CD4-positive, alpha-beta memory T cell (primary cell): ENCODE measurements at regions of chr2 and their contacts with region 1.

Region 1: DNA sequence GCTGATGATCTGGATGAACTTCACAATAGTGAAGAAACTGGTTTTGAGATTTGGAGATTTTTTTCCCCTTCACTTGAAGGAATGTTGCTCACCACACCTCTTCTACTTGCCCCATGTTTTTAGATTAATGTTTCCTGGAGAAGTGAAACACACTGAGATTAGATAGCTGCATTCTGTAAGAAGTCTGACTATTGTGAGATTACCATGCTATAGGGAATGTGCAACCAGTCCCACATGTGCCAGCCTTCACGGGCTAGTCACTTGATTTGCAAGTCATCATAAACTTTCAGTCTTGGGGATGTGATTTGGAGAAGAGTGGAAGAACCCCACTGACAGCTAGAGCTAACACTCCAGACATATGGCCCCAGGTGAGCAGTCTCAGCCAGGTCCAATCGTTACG is 7.4 kb upstream of the CCNYL1 start:
- DNase-seq: no peak
- H3K4me3 ChIP-seq: no peak overlapping the region
- H3K4me3 Mint-ChIP-seq: no peak overlapping the region
- H3K27ac ChIP-seq: no peak overlapping the region
- H3K27ac Mint-ChIP-seq: no peak overlapping the region
- H3K4me1 ChIP-seq: no peaks in the 10 kb centered on the region
- H3K4me1 Mint-ChIP-seq: no peaks in the 10 kb centered on the region
- H3K27me3 ChIP-seq: no peaks in the 10 kb centered on the region
- H3K27me3 Mint-ChIP-seq: peaks cover 0 to 1% of the 10 kb centered on the region in 2 donors

Region 2: DNA sequence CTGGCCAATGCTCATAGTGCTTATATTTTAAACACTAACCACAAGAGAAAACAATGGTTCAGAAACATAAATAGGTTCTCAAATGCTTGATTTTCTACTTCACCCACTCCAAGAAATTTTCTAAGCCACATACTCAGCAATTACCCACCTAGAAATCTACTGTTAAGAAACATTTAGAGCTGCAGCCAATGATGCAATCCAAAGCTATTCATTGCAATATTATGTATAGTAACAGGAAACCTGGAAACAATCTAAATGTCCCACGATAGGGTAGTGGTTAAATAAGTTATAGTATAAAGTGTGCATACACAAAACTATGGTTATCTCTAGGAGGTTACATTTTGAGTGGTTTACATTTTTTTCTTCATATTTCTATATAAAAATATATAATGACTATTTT is 1056.1 kb before region 1 on chr2:
- CTCF ChIA-PET with region 1: no interaction called
- POLR2A ChIA-PET with region 1: no interaction called
- intact Hi-C with region 1: no loop called
- DNase-seq: no peak
- H3K4me3 ChIP-seq: no peak overlapping the region
- H3K4me3 Mint-ChIP-seq: no peak overlapping the region
- H3K27ac ChIP-seq: no peak overlapping the region
- H3K27ac Mint-ChIP-seq: no peak overlapping the region
- H3K4me1 ChIP-seq: no peaks in the 10 kb centered on the region
- H3K4me1 Mint-ChIP-seq: no peaks in the 10 kb centered on the region
- H3K27me3 ChIP-seq: no peaks in the 10 kb centered on the region
- H3K27me3 Mint-ChIP-seq: peaks cover 5 to 13% of the 10 kb centered on the region in 2 donors

Region 3: DNA sequence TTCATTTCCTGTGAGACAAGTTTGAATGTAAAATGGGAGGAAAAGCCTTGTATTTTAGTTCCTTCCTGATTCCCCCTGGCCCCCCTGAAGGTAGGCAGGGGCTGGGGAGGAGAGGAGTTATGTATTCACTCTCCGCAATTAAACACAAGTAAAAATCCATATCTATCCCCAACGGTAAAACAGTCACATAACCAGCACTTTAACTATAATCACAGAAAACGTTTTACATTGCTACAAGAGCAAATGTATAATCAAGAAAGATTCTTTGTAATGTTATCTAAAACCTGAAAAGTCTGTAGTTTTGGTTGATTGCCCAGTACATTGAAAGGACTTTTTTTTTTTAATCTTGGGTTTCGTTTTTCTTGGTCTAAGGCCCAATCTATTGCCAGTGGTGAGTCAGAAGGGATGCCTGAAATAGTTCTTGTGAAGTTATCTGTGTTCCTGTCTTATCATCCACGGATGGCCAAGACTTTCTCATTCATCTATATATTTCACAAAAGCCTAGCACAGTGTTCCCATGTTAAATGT is 27.2 kb before region 1 on chr2:
- CTCF ChIA-PET with region 1: no interaction called
- POLR2A ChIA-PET with region 1: no interaction called
- intact Hi-C with region 1: loop called (anchors 1 kb)
- DNase-seq: no peak
- H3K4me3 ChIP-seq: no peak overlapping the region
- H3K4me3 Mint-ChIP-seq: no peak overlapping the region
- H3K27ac ChIP-seq: no peak overlapping the region
- H3K27ac Mint-ChIP-seq: no peak overlapping the region
- H3K4me1 ChIP-seq: no peaks in the 10 kb centered on the region
- H3K4me1 Mint-ChIP-seq: no peaks in the 10 kb centered on the region
- H3K27me3 ChIP-seq: no peaks in the 10 kb centered on the region
- H3K27me3 Mint-ChIP-seq: peaks cover 6 to 8% of the 10 kb centered on the region in 2 donors

Region 4: DNA sequence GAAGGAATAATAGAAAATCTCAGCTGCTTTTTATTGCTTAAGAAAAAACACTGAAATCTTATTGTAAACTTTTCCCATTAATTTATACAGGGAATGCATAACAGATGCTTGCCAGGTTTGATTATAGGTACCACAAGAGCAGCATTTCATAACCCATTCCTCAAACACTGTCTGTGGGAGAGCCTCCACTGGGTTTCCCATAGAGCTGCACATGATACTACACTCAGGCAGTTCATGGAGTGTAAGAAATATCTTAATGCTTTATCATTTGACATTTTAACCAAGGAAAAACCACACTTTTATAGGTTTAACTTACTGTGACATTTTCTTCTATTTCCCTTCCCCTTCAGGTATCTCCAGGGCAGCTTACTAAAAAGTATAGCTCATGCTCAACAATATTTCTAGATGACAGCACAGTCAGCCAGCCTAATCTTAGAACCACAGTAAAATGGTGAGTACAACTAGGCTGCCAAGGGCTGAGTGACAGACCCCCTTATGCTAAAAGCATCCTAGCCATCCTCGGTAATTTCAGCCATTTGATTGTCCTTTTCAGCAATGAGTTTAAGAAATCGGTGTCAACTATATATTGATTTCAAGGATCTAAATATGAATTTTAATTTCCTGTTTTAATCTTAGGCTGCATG is 29.6 kb after region 1 on chr2:
- CTCF ChIA-PET with region 1: no interaction called
- POLR2A ChIA-PET with region 1: no interaction called
- intact Hi-C with region 1: no loop called
- DNase-seq: no peak
- H3K4me3 ChIP-seq: no peak overlapping the region
- H3K4me3 Mint-ChIP-seq: no peak overlapping the region
- H3K27ac ChIP-seq: no peak overlapping the region
- H3K27ac Mint-ChIP-seq: no peak overlapping the region
- H3K4me1 ChIP-seq: no peaks in the 10 kb centered on the region
- H3K4me1 Mint-ChIP-seq: peaks cover 0 to 6% (median 2%) of the 10 kb centered on the region in 4 donors
- H3K27me3 ChIP-seq: no peaks in the 10 kb centered on the region
- H3K27me3 Mint-ChIP-seq: no peaks in the 10 kb centered on the region